Cardiac septum (tissue), 1 donor: ENCODE measurements at regions of chr6 and their contacts with region 1.

Region 1: DNA sequence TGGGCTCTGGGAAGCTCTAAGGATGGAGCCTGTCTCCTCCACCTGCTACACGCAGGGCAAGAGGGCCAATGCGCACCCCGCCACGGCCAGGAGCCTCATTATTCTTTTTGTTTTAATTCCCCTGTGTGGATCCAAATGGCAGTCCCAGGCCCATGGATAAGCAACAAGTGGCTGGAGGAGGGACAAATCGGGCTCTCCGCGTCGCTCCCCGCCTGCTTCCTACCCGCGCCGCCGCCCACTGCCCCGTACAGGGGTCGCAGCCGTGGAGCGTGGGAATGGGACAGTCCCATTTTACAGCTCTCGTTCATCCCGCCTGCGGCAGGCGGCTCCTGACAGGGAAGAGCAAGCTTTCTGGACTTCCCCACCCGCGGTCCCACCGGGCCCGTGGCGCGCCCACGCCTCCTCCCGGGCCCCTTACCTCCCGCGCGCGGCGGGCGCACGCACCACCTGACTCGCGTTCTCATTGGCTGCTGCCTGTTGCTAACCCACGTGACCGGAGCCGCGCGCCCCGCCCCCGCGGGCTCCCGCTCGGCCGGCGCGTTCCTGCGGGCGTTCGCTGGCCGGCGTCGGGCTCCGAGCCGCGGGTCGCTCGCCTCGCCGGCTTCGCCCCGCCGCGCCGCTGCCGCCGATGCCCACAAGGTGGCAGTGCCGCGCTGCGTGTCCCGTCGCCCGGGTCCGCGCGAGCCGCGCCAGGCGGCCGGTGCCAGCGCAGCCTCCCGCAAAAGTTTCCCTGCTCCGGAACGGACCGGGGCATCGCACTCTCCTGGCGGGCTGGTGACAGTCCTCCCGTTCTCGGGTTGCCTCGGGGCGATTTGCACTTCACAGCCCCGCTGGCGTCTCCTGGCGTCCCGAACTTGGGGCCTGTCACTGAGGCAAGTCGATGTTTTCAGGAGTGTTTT is 93.3 kb downstream of the CD83 start:
- DNase-seq: peak; percentile 95

Region 2: GRCh38 chr6:14178083-14178445 is 32.8 kb before region 1 on chr6:
- intact Hi-C with region 1: no loop called
- DNase-seq: no peak

Region 3: DNA sequence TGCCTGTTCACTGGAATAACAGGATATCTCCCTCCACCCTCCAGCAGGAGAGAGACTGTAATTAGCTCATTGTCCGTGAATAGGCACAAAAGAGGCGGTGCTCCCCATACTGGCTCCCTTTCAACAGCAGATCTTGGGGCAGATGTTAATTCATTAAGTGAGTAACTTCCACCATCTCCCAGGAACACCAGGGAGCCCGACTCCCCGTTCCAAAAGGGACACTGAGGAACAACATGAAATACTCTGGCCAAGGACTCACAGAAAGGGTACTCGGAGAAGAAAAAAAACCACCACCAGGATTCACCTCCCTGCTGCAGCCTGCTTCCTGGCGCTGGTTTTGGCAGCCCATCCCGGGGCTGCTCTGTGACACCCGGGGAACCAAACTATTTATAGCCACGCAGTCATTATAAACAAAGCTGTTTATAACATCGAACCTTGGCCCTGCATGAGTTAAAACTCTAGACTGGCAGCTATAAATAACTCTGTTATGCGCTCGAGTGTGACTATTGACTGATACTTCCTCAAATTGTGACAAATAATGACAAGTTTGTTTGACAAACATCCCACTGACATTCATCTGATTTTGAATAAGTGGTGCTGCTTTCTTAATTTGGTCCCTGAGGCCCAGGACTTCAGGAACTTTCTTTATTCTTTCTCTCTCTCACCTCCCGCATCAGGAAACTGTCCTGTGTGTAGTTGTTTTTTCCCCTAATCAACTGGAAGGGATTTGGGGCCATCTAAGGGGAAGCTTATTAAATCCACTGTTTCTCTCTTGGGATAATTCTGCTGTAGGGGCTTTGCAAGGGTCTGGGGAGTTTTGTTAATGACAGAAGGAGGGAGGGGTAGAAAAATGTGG is 428.2 kb after region 1 on chr6:
- intact Hi-C with region 1: loop called (anchors 5 kb)
- DNase-seq: peak; percentile 81

Region 4: DNA sequence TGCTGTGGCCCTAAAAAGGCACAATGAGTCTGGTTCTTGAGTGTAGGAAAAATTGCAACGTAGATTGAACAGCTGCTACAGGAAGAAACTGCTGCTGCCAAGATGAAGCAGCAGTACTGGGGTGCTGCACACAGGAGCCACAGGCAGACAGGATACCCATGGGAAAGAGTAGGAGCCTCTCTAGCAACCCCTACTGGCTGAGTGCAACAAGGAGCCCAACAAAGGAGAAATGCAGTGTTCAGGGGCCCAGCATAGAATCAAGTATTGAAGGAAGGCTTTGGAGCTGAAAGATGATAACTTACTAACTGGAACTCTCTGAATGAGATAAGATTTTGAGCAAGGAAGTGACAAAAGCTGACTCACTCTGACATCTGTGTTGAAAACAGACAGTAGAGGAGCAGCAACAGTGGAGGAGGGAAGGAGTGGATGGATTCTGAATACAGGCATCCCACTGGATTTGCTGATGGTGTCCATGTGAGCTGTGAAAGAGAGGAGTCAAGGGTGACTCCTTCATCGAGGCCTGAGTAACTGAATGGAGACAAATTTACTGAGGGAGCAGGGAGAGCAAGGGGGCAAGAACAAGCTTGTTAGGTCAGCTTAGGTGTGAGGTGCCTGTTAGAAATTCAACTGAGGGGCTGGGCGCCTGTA is 500.3 kb after region 1 on chr6:
- intact Hi-C with region 1: loop called (anchors 5 kb)
- DNase-seq: no peak

Region 5: DNA sequence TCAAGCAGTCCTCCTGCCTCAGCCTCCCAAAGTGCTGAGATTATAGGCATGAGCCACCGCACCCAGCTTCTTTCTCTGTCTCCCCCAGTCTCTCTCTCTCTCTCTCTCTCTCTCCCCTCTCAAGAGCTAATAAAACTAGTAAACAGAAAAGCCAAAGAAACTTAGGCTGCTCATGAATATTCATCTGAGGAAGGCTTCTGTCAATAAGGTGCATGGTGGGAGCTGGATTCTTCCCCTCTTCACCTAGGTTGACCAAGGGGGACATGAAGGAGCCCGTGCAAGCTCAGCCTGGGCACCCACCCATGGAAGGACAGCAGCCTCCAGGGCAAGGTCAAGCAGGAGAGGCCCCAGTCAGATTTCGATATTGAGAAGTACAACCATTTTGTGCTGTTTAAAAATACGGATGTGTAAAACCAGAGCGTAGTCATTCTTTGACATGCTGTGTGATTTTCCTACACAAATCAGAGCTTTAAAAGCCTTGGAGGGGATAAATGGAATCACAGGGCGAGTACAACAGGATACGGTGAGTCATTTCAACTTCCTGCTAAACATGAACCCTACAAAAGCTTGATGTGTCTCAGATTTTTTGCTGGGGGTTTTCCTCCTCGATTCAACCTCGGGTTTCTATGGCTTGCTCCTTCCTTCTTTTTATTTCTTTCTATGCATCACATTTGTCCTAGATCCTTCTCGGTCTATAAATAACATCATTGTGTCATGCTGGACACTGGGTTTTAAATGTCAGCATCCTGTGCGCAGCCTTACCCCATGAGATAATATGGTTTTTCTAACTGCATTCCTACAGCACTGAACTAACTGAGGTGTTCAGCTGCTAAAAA is 666.1 kb after region 1 on chr6:
- intact Hi-C with region 1: loop called (anchors 5 kb)
- DNase-seq: no peak

Region 6: GRCh38 chr6:15389765-15390723 is 1179.1 kb after region 1 on chr6:
- intact Hi-C with region 1: loop called (anchors 5 kb)
- DNase-seq: no peak

Region 7: GRCh38 chr6:15491255-15491985 is 1280.5 kb after region 1 on chr6:
- intact Hi-C with region 1: loop called (anchors 5 kb)
- DNase-seq: peak; percentile 86